ENCODE measurements at regions of chr1 and their contacts with region 1.

Region 1: GRCh38 chr1:207828485-207829158 is 76.8 kb downstream of the CD46 start:
- DNase-seq: peak; percentile 80
- ATAC-seq: no peak
- H3K4me3 ChIP-seq: no peak overlapping the region
- H3K4me3 Mint-ChIP-seq: peak overlapping the region; percentile 3
- H3K27ac ChIP-seq: peak overlapping the region in 1 of 2 donors; percentile 20
- H3K27ac Mint-ChIP-seq: peak overlapping the region; percentile 37
- H3K4me1 ChIP-seq: peaks cover 72 to 82% of the 10 kb centered on the region in 2 donors
- H3K4me1 Mint-ChIP-seq: peaks cover 92% of the 10 kb centered on the region
- H3K27me3 ChIP-seq: no peaks in the 10 kb centered on the region
- H3K27me3 Mint-ChIP-seq: peaks cover 4% of the 10 kb centered on the region
- CTCF ChIP-seq: peak; percentile 85

Region 2: GRCh38 chr1:207691841-207692240 is 136.8 kb before region 1 on chr1:
- CTCF ChIA-PET with region 1: no interaction called
- POLR2A ChIA-PET with region 1: no interaction called
- intact Hi-C with region 1: no loop called
- DNase-seq: no peak
- ATAC-seq: no peak
- H3K4me3 ChIP-seq: no peak overlapping the region
- H3K4me3 Mint-ChIP-seq: no peak overlapping the region
- H3K27ac ChIP-seq: no peak overlapping the region
- H3K27ac Mint-ChIP-seq: no peak overlapping the region
- H3K4me1 ChIP-seq: no peaks in the 10 kb centered on the region
- H3K4me1 Mint-ChIP-seq: no peaks in the 10 kb centered on the region
- H3K27me3 ChIP-seq: peaks cover 0 to 6% (median 0%) of the 10 kb centered on the region in 4 experiments
- H3K27me3 Mint-ChIP-seq: peaks cover 9% of the 10 kb centered on the region
- CTCF ChIP-seq: no peak

Region 3: GRCh38 chr1:207797229-207797961 is 31.2 kb before region 1 on chr1:
- CTCF ChIA-PET with region 1: interaction called, 54 read pairs
- POLR2A ChIA-PET with region 1: interaction called, 9 read pairs
- intact Hi-C with region 1: no loop called
- DNase-seq: peak; percentile 75
- ATAC-seq: peak; percentile 80
- H3K4me3 ChIP-seq: no peak overlapping the region
- H3K4me3 Mint-ChIP-seq: no peak overlapping the region
- H3K27ac ChIP-seq: no peak overlapping the region
- H3K27ac Mint-ChIP-seq: no peak overlapping the region
- H3K4me1 ChIP-seq: peaks cover 16 to 22% of the 10 kb centered on the region in 2 donors
- H3K4me1 Mint-ChIP-seq: peaks cover 33% of the 10 kb centered on the region
- H3K27me3 ChIP-seq: no peaks in the 10 kb centered on the region
- H3K27me3 Mint-ChIP-seq: no peaks in the 10 kb centered on the region
- CTCF ChIP-seq: peak; percentile 83

Region 4: GRCh38 chr1:207811920-207812720 is 16.5 kb before region 1 on chr1:
- CTCF ChIA-PET with region 1: interaction called, 24 read pairs
- POLR2A ChIA-PET with region 1: interaction called, 4 read pairs
- intact Hi-C with region 1: loop called (anchors 2 kb)
- DNase-seq: peak; percentile 31
- ATAC-seq: no peak
- H3K4me3 ChIP-seq: no peak overlapping the region
- H3K4me3 Mint-ChIP-seq: no peak overlapping the region
- H3K27ac ChIP-seq: peak overlapping the region in 1 of 2 donors; percentile 25
- H3K27ac Mint-ChIP-seq: peak overlapping the region; percentile 72
- H3K4me1 ChIP-seq: peaks cover 34 to 46% of the 10 kb centered on the region in 2 donors
- H3K4me1 Mint-ChIP-seq: peaks cover 88% of the 10 kb centered on the region
- H3K27me3 ChIP-seq: no peaks in the 10 kb centered on the region
- H3K27me3 Mint-ChIP-seq: no peaks in the 10 kb centered on the region
- CTCF ChIP-seq: no peak

Region 5: DNA sequence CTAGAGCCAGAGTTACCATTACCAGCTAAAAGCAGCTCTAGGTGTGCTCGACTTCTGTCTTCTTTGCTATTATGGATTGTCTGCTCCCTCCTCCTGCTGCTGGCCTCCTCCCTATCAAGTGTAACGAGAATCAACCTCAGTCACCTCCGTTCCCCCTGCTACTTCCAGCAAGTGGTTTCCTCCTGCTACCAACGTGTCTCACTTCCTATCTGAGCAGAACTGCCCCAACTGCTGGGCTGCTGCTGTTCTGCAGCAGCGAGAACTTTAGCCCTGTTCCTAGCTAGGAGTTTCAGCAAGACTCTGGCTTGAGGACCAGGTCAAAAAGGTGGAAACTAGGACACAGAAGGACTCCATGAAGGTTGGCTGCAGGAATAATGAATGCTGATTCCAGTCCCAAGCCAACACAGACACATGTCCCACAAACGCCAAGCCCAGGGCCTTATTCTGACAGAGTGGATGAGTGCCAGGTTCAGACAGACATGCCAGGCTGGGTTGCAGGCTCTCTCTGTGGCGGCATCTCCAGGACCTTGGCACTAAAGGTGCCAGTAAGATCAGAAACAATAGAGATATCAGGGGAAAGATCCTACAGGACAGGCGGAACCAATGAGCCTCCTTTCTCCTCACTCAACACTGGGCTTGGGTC is 35.4 kb after region 1 on chr1:
- CTCF ChIA-PET with region 1: interaction called, 526 read pairs
- POLR2A ChIA-PET with region 1: interaction called, 71 read pairs
- intact Hi-C with region 1: loop called (anchors 1 kb)
- DNase-seq: peak; percentile 66
- ATAC-seq: peak; percentile 56
- H3K4me3 ChIP-seq: no peak overlapping the region
- H3K4me3 Mint-ChIP-seq: peak overlapping the region; percentile 26
- H3K27ac ChIP-seq: peak overlapping the region in 1 of 2 donors; percentile 46
- H3K27ac Mint-ChIP-seq: peak overlapping the region; percentile 54
- H3K4me1 ChIP-seq: peaks cover 49 to 59% of the 10 kb centered on the region in 2 donors
- H3K4me1 Mint-ChIP-seq: peaks cover 62% of the 10 kb centered on the region
- H3K27me3 ChIP-seq: no peaks in the 10 kb centered on the region
- H3K27me3 Mint-ChIP-seq: no peaks in the 10 kb centered on the region
- CTCF ChIP-seq: no peak

Region 6: GRCh38 chr1:207876131-207876530 is 47.5 kb after region 1 on chr1:
- CTCF ChIA-PET with region 1: interaction called, 526 read pairs
- POLR2A ChIA-PET with region 1: interaction called, 11 read pairs
- intact Hi-C with region 1: no loop called
- DNase-seq: no peak
- ATAC-seq: no peak
- H3K4me3 ChIP-seq: no peak overlapping the region
- H3K4me3 Mint-ChIP-seq: no peak overlapping the region
- H3K27ac ChIP-seq: no peak overlapping the region
- H3K27ac Mint-ChIP-seq: no peak overlapping the region
- H3K4me1 ChIP-seq: peaks cover 29 to 30% of the 10 kb centered on the region in 2 donors
- H3K4me1 Mint-ChIP-seq: peaks cover 39% of the 10 kb centered on the region
- H3K27me3 ChIP-seq: no peaks in the 10 kb centered on the region
- H3K27me3 Mint-ChIP-seq: no peaks in the 10 kb centered on the region
- CTCF ChIP-seq: no peak

Region 7: GRCh38 chr1:207963427-207964194 is 135.0 kb after region 1 on chr1:
- CTCF ChIA-PET with region 1: interaction called, 53 read pairs
- POLR2A ChIA-PET with region 1: no interaction called
- intact Hi-C with region 1: loop called (anchors 1 kb)
- DNase-seq: peak; percentile 87
- ATAC-seq: peak; percentile 94
- H3K4me3 ChIP-seq: peak overlapping the region; percentile 55 to 92 (median 88)
- H3K4me3 Mint-ChIP-seq: peak overlapping the region; percentile 92
- H3K27ac ChIP-seq: peak overlapping the region; percentile 27 to 62
- H3K27ac Mint-ChIP-seq: peak overlapping the region; percentile 70
- H3K4me1 ChIP-seq: peaks cover 21 to 25% of the 10 kb centered on the region in 2 donors
- H3K4me1 Mint-ChIP-seq: peaks cover 16% of the 10 kb centered on the region
- H3K27me3 ChIP-seq: peaks cover 0 to 29% (median 12%) of the 10 kb centered on the region in 4 experiments
- H3K27me3 Mint-ChIP-seq: peaks cover 20% of the 10 kb centered on the region
- CTCF ChIP-seq: peak; percentile 99

Region 8: DNA sequence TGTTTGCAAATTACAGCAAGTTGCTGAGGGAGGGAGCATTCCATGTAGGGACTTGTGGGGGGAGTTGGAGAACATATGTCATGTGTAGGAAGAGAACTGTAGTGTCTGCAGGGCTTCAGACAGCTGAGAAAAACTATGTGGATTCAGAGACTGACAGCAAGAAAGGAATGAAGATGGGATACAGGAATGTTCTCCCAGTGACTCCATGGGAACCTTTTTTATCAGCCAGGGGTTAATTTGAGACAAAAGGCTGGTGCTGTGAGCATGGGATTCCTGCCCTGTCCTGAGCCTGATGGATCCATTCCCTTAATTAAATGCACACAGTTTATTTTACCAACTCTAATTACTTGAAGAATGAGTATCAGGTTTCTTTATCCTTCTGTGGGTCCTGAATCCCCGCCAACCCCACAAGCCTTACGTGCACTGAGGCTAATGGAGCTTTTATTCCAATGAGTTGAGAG is 442.1 kb after region 1 on chr1:
- CTCF ChIA-PET with region 1: no interaction called
- POLR2A ChIA-PET with region 1: no interaction called
- intact Hi-C with region 1: no loop called
- DNase-seq: no peak
- ATAC-seq: no peak
- H3K4me3 ChIP-seq: no peak overlapping the region
- H3K4me3 Mint-ChIP-seq: no peak overlapping the region
- H3K27ac ChIP-seq: no peak overlapping the region
- H3K27ac Mint-ChIP-seq: no peak overlapping the region
- H3K4me1 ChIP-seq: no peaks in the 10 kb centered on the region
- H3K4me1 Mint-ChIP-seq: no peaks in the 10 kb centered on the region
- H3K27me3 ChIP-seq: peaks cover 0 to 8% (median 5%) of the 10 kb centered on the region in 4 experiments
- H3K27me3 Mint-ChIP-seq: peaks cover 63% of the 10 kb centered on the region
- CTCF ChIP-seq: no peak

Measured in B cell (primary cell).